Transverse colon (tissue), 4 donors: ENCODE measurements at regions of chr17 and their contacts with region 1.

Region 1: DNA sequence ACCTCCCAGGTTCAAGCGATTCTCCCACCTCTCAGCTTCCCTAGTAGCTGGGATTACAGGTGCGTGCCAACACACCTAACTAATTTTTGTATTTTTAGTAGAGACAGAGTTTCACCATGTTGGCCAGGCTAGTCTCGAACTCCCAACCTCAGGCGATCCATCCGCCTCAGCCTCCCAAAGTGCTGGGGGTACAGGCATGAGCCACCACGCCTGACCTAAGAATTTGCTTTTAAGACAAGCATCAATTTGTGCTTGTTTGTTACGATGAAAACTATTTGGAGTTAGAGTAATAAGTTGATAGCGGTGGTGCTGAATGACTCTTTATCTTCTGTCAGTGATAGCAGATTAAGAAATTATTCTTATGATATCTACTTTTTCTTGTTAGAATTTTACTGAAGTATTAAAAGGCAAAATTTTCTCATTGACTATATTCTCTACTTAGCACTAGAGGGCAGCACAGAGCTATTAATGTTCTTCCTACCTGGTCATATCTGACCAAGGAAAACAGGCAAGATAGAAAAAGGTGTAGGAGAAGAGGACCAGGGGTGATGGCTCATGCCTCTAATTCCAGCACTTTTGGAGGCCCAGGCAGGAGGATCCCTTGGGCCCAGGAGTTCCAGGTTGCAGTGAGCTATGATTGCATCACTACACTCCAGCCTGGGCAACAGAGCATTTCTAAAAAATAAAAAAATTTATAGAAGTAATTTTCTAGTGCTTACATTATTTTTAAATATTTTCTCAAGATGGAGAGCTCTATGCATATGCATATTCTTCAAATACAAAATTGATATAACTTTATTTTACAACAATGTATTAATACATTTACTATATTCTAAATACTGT is 24.5 kb downstream of the STXBP4 start:
- DNase-seq: no peak
- H3K4me3 ChIP-seq: no peak overlapping the region
- H3K27ac ChIP-seq: no peak overlapping the region
- H3K4me1 ChIP-seq: no peaks in the 10 kb centered on the region
- H3K27me3 ChIP-seq: no peaks in the 10 kb centered on the region
- CTCF ChIP-seq: peak; percentile 63 to 67 (median 64)
- EP300 ChIP-seq: no peak
- POLR2A ChIP-seq: no peak

Region 2: DNA sequence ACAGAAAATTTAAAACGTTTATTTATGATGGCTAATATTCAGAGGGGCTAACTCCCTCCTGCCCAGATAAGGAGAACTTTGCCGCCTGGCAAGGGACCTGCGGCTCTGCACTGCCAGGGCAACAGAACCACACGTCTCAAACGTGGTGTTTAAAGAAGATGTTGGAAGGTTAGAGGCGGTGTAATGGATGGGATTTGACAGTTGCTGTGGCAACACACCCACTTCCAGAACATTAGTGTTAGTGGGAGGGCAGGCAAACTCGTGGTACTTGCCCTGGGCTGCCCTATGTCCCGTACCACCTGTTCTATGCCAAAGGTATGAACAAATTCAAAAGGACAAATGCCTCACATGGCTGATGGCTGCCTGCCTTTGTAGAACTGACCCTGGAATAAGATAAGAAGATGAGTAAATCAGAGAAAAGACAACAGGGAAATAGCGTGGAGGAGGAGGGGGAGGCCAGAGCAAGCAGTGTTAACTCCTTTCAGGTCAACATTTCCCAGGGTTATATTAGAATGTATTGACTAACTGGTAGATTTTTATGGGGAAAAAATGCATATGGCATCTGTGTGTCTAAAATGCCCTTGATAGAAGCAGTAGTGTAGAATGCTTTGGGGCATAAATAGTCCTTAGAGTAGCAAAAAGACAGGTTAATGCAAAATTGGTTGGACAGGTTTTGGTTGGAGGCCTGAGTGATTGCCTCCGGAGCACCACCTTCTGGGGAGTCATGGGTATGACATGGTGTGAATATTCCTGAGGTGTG is 302.6 kb after region 1 on chr17:
- in situ Hi-C with region 1: loop called in 3 of 4 experiments (anchors 5 to 10 kb)
- intact Hi-C with region 1: no loop called
- DNase-seq: peak; percentile 66
- H3K4me3 ChIP-seq: no peak overlapping the region
- H3K27ac ChIP-seq: no peak overlapping the region
- H3K4me1 ChIP-seq: peaks cover 0 to 11% (median 0%) of the 10 kb centered on the region in 4 donors
- H3K27me3 ChIP-seq: no peaks in the 10 kb centered on the region
- CTCF ChIP-seq: peak; percentile 83 to 90 (median 84)
- EP300 ChIP-seq: no peak
- POLR2A ChIP-seq: no peak

Region 3: GRCh38 chr17:55303701-55304145 is 310.7 kb after region 1 on chr17:
- in situ Hi-C with region 1: loop called in 3 of 4 experiments (anchors 5 to 10 kb)
- intact Hi-C with region 1: no loop called
- DNase-seq: no peak
- H3K4me3 ChIP-seq: no peak overlapping the region
- H3K27ac ChIP-seq: no peak overlapping the region
- H3K4me1 ChIP-seq: peaks cover 0 to 11% (median 2%) of the 10 kb centered on the region in 4 donors
- H3K27me3 ChIP-seq: no peaks in the 10 kb centered on the region
- CTCF ChIP-seq: no peak
- EP300 ChIP-seq: no peak
- POLR2A ChIP-seq: no peak

Region 4: DNA sequence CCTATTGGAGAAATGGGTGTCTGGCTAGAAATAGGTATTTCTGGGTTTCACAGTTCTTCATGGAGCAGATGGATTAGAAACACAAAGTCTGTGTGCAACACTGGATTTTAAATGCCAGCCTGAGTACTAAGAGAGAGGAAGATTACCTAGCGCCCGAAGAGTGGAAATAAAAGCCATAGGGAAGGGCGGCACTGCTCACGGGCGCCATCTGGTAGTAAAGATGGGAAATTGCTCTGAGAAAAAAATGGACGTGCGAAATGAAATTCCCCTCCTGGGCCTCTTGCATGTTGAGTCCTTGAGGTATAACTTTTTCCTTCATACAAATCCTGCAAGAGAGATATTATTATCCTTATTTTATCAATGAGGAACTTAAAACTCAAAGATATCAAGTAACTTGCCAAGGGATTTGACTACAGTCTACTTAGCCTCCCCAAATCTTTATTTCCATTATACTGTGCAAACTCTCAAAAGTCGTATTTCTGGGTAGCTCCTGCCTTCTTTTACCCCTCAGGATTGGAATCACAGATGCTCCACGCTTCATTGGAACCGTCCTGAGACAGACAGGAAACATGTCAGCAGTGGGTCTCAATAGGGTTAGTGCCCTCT is 355.8 kb after region 1 on chr17:
- in situ Hi-C with region 1: loop called in 2 of 4 experiments (anchors 10 kb)
- intact Hi-C with region 1: loop called (anchors 5 kb)
- DNase-seq: peak; percentile 49
- H3K4me3 ChIP-seq: no peak overlapping the region
- H3K27ac ChIP-seq: no peak overlapping the region
- H3K4me1 ChIP-seq: peaks cover 0 to 4% (median 2%) of the 10 kb centered on the region in 4 donors
- H3K27me3 ChIP-seq: no peaks in the 10 kb centered on the region
- CTCF ChIP-seq: peak; percentile 73 to 87 (median 81)
- EP300 ChIP-seq: no peak
- POLR2A ChIP-seq: no peak

Region 5: GRCh38 chr17:55356434-55357328 is 363.7 kb after region 1 on chr17:
- in situ Hi-C with region 1: loop called in 2 of 4 experiments (anchors 10 kb)
- intact Hi-C with region 1: no loop called
- DNase-seq: peak; percentile 72
- H3K4me3 ChIP-seq: no peak overlapping the region
- H3K27ac ChIP-seq: no peak overlapping the region
- H3K4me1 ChIP-seq: no peaks in the 10 kb centered on the region
- H3K27me3 ChIP-seq: no peaks in the 10 kb centered on the region
- CTCF ChIP-seq: peak; percentile 59 to 76 (median 70)
- EP300 ChIP-seq: no peak
- POLR2A ChIP-seq: no peak

Region 6: DNA sequence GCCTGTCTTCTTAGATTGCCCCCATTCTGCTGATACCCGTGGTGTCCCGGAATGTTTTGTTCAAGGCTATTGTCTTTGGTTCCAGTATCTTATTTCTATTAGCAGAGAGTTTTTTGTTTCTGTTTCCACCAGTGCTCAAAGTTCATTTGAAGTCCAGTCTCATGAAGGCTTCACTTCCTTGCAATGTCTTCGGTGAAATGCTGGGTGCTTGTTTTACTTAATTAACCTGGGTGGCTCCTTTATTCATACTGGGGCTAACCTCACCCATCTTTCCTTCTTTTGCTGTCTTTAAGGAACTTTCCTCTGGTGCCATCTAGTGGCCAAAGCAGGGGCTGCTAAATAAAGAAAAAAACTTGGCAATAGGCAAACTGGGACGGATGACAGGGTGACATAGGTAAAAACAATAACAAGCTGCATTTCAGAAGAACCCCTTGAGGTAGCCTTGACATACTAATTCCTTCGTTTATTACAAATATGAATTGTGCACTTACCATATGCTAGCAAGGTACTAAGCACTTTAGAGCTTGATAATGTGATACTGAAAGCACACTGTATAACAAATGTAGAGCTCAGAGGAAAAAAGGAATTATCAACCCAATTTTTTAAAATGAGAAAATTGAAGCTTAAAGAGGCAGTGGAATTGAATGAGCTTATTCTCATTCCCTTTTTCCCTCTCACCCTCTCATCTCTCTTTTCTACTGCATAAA is 521.0 kb after region 1 on chr17:
- in situ Hi-C with region 1: loop called in 3 of 4 experiments (anchors 10 to 25 kb)
- intact Hi-C with region 1: no loop called
- DNase-seq: peak; percentile 78
- H3K4me3 ChIP-seq: no peak overlapping the region
- H3K27ac ChIP-seq: no peak overlapping the region
- H3K4me1 ChIP-seq: peaks cover 0 to 10% (median 0%) of the 10 kb centered on the region in 4 donors
- H3K27me3 ChIP-seq: no peaks in the 10 kb centered on the region
- CTCF ChIP-seq: peak; percentile 84 to 97 (median 90)
- EP300 ChIP-seq: no peak
- POLR2A ChIP-seq: no peak

Region 7: GRCh38 chr17:55750750-55751657 is 758.0 kb after region 1 on chr17 and contains the start of gene PCTP:
- in situ Hi-C with region 1: loop called in 1 of 4 experiments (anchors 25 kb)
- intact Hi-C with region 1: no loop called
- DNase-seq: peak; percentile 96
- H3K4me3 ChIP-seq: peak within 1 kb of the TSS; percentile 61 to 93 (median 74)
- H3K27ac ChIP-seq: peak within 1 kb of the TSS; percentile 82 to 95 (median 91)
- H3K4me1 ChIP-seq: peaks cover 7 to 21% (median 12%) of the 10 kb centered on the region in 4 donors
- H3K27me3 ChIP-seq: no peaks in the 10 kb centered on the region
- CTCF ChIP-seq: peak; percentile 27 to 66 (median 45)
- EP300 ChIP-seq: peak; percentile 14
- POLR2A ChIP-seq: peak; percentile 93
- total RNA-seq, gene PCTP: 8.6 to 581 (median 35.0) TPM